Ascending aorta (tissue), 2 donors: ENCODE measurements at regions of chr12 and their contacts with region 1.

Region 1: GRCh38 chr12:62934799-62935674 is at the start of gene PPM1H:
- DNase-seq: peak in 1 of 2 donors; percentile 69
- H3K4me3 ChIP-seq: peak within 1 kb of the TSS; percentile 70 to 83
- H3K27ac ChIP-seq: peak within 1 kb of the TSS; percentile 63 to 81
- H3K4me1 ChIP-seq: peaks cover 0 to 4% of the 10 kb centered on the region in 2 donors
- H3K27me3 ChIP-seq: no peaks in the 10 kb centered on the region
- CTCF ChIP-seq: peak; percentile 19 to 53 (median 43)
- total RNA-seq, gene PPM1H: 0.85 TPM

Region 2: DNA sequence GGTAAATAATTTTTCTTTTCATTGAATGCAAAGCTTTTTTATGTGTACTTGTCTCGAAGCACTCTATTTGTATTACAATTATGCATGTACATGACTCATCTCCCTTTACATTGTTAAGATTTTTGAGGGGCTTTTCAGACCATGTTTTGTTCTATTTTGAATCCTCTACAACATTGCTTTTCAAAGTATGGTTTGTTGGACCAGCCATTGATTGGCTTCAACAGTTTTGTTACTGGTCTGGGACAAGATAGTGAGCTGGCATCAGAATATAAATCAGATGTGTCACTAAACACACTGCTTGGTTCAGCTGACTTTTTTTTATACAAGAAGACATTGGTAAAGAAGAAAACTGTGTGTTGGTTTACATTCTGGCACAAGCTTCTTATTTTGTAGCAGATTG is 346.1 kb before region 1 on chr12:
- intact Hi-C with region 1: no loop called
- DNase-seq: no peak
- H3K4me3 ChIP-seq: no peak overlapping the region
- H3K27ac ChIP-seq: no peak overlapping the region
- H3K4me1 ChIP-seq: no peaks in the 10 kb centered on the region
- H3K27me3 ChIP-seq: no peaks in the 10 kb centered on the region
- CTCF ChIP-seq: no peak

Region 3: DNA sequence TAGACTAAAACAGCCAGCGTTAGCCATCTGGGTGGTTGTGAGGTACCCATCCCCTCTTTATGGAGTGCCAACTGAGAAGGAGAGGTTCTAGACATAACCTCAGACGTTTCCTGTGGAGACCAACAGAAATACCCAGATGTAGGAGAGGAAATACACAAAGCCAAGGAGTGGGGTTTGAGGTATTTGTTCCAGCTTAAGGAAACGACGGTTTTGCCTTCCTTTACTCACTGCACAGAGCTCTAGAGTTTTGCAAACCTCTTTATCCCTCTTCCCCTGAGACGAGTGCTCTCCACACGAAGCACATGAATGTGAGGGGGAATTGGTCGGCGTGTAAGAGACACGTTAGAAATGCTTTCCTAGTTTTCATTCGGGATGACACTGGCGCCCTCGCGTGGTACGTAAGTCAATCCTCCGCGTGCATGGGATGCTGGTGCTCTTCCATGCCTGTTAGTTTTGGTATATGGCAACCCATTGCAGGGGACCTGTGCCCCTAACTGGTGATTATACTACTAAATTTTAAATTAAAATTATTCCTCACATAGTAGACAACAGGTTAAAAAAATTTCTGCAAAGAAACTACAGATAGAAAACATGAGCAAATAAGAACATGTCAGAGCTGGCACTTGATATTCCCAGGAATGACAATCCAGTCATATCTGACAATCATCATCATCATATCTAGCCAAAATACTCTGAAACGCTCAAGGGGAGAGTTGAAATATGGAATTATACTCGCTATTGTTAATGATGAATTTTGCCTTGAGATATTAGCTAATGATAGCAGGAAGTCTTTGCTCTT is 121.8 kb before region 1 on chr12:
- intact Hi-C with region 1: loop called (anchors 5 kb)
- DNase-seq: peak in 1 of 2 donors; percentile 77
- H3K4me3 ChIP-seq: peak overlapping the region in 1 of 2 donors; percentile 48
- H3K27ac ChIP-seq: no peak overlapping the region
- H3K4me1 ChIP-seq: peaks cover 0 to 4% of the 10 kb centered on the region in 2 donors
- H3K27me3 ChIP-seq: no peaks in the 10 kb centered on the region
- CTCF ChIP-seq: peak; percentile 45 to 73 (median 70)

Region 4: GRCh38 chr12:62862259-62862881 is 72.7 kb before region 1 on chr12:
- intact Hi-C with region 1: loop called (anchors 5 kb)
- DNase-seq: no peak
- H3K4me3 ChIP-seq: no peak overlapping the region
- H3K27ac ChIP-seq: peak overlapping the region in 1 of 2 donors; percentile 70
- H3K4me1 ChIP-seq: peaks cover 0 to 21% of the 10 kb centered on the region in 2 donors
- H3K27me3 ChIP-seq: no peaks in the 10 kb centered on the region
- CTCF ChIP-seq: no peak

Region 5: DNA sequence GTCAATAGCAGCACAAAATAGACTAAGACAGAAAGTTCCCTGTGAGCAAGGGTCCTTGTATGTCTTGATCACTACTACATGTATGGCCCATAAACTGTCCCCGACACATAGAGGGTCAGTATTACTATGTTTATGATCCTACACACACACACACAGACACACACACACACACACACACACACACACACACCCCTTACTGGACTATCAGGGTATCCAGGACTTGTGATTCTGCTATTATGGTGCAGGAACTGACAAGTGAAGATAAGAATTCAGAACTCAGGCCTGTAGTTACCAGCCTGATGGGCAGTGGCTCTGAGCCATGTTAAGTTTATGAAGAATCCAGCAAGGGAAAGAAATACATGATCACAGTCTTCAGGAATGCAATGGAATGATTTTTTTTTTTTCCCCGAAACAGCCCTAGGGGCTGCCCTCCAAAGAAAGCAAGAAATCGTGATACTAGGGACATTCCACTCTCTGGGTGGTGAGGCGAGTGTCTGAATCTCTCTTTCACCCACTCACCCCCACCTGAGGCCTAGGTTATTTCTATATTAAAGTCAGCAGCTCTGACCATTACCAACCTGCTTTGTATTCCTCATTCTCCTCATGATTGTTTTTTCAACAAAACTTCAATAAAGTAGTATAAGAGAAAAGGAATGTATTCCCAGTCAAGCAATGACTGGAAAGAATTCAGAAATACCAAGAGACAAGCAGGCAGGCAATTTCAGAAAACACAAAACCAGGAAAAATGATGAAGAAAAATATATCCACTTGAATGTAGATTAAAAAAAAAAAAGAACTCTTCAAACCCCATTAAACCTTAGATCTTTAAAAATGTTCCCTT is 110.2 kb after region 1 on chr12:
- intact Hi-C with region 1: loop called (anchors 2 kb)
- DNase-seq: peak in 1 of 2 donors; percentile 78
- H3K4me3 ChIP-seq: no peak overlapping the region
- H3K27ac ChIP-seq: peak overlapping the region; percentile 78 to 86
- H3K4me1 ChIP-seq: peaks cover 0 to 9% of the 10 kb centered on the region in 2 donors
- H3K27me3 ChIP-seq: no peaks in the 10 kb centered on the region
- CTCF ChIP-seq: no peak